ENCODE measurements at regions of chr3 and their contacts with region 1.

Region 1: DNA sequence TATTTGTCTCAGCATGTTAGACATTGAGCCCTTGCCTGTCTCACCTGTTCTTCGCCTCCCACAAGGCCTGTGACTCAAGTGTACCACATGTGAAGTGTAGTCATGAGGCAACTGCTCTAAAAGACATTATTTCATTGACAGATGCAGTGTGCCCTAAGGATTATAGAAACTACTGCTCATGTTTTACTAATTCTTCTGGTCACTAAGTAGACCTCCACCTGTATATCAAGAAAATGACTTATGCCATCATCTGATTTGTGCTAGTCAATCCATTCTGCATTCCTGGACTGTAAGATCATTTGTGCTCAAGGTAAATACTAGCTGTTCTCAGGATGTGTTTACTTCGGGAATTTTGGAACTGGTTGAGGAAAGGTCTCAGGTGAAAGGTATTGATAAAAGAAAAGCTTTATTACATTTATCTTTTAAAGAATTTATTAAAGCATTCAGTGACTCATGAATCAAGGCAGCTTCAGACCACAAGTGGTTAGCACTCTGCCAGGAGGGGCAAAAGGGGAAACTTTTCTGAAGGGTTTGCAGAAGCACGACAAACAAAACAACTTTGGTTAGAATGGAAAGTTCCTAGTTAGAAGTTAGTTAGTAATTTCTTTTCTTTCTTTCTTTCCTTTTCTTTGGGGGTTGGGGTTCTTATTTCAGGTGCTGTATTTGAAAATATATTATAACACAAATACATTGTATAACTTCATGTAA is 465.3 kb upstream of the CBLB start:
- DNase-seq: peak; percentile 80
- H3K4me3 Mint-ChIP-seq: peak overlapping the region; percentile 68
- H3K27ac Mint-ChIP-seq: peak overlapping the region; percentile 95
- H3K4me1 Mint-ChIP-seq: peaks cover 71% of the 10 kb centered on the region
- H3K27me3 Mint-ChIP-seq: no peaks in the 10 kb centered on the region

Region 2: DNA sequence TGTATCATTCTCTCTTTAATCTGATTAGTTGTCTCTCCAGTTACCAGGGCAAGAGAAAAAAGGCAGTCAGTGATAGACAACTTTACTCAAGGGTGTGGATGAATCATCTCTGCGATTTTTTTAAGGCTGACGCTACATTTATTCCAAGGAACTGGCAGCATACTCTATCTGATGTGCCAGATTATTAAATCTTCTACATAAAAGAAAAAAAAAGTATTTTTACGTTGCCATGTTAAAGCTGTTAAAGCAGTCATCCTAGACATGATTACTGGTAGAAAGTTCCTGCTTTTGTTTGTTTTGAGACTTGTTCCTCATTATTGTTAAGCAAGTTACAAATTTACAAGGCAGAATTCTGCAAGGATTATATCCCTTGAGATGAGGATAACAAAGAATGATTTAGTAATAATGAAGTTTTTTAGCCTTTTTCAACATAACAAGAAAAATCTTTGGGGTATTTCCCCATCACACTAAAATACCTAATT is 587.0 kb before region 1 on chr3:
- CTCF ChIA-PET with region 1: no interaction called
- intact Hi-C with region 1: loop called (anchors 2 kb)
- DNase-seq: no peak
- H3K4me3 Mint-ChIP-seq: no peak overlapping the region
- H3K27ac Mint-ChIP-seq: peak overlapping the region; percentile 79
- H3K4me1 Mint-ChIP-seq: peaks cover 76% of the 10 kb centered on the region
- H3K27me3 Mint-ChIP-seq: no peaks in the 10 kb centered on the region

Region 3: GRCh38 chr3:105842943-105843342 is 491.1 kb before region 1 on chr3:
- CTCF ChIA-PET with region 1: no interaction called
- intact Hi-C with region 1: no loop called
- DNase-seq: no peak
- H3K4me3 Mint-ChIP-seq: no peak overlapping the region
- H3K27ac Mint-ChIP-seq: no peak overlapping the region
- H3K4me1 Mint-ChIP-seq: peaks cover 53% of the 10 kb centered on the region
- H3K27me3 Mint-ChIP-seq: no peaks in the 10 kb centered on the region

Region 4: GRCh38 chr3:106013971-106014370 is 320.1 kb before region 1 on chr3:
- CTCF ChIA-PET with region 1: no interaction called
- intact Hi-C with region 1: loop called (anchors 2 kb)
- DNase-seq: no peak
- H3K4me3 Mint-ChIP-seq: no peak overlapping the region
- H3K27ac Mint-ChIP-seq: peak overlapping the region; percentile 37
- H3K4me1 Mint-ChIP-seq: peaks cover 49% of the 10 kb centered on the region
- H3K27me3 Mint-ChIP-seq: no peaks in the 10 kb centered on the region

Region 5: DNA sequence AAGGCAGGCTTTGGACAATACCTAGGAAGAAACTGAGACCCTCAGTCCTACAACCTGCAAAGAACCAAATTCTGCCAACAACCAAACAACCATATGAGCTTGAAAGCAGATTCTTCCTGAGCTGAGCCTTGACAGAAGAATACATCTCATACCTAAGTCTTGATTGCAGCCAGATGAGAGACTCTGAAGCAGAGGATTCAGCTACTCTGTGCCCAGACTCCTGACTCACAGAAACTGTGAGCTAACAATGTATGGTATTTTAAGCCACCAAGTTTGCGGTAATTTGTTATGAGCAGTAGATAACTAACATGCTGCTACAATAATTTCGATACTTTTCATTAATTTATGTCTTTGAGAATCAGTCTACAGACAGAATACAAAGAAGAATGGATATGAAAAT is 140.2 kb before region 1 on chr3:
- CTCF ChIA-PET with region 1: no interaction called
- intact Hi-C with region 1: no loop called
- DNase-seq: no peak
- H3K4me3 Mint-ChIP-seq: no peak overlapping the region
- H3K27ac Mint-ChIP-seq: no peak overlapping the region
- H3K4me1 Mint-ChIP-seq: peaks cover 23% of the 10 kb centered on the region
- H3K27me3 Mint-ChIP-seq: no peaks in the 10 kb centered on the region

Region 6: DNA sequence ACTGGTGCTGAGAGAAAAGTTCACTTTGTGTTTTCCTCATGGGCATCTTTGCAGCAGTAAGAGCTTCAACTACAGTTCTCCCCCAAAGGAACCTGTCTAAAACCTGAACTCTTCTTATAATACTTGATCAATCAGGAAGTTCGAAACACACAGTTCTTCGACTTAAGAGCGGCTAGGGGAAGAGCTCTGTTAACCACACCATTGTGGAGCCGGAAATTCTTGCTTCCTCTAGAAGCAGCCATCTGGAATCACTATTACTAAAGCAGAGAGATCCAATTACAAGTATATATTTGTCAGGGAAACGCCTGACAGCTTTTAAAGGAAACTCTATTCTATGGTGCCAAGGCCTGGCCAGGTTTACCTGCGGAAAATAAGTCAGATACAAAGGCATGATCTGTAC is 127.9 kb before region 1 on chr3:
- CTCF ChIA-PET with region 1: interaction called, 4 read pairs
- intact Hi-C with region 1: loop called (anchors 1 kb)
- DNase-seq: peak; percentile 47
- H3K4me3 Mint-ChIP-seq: peak overlapping the region; percentile 55
- H3K27ac Mint-ChIP-seq: peak overlapping the region; percentile 98
- H3K4me1 Mint-ChIP-seq: peaks cover 55% of the 10 kb centered on the region
- H3K27me3 Mint-ChIP-seq: no peaks in the 10 kb centered on the region

Region 7: DNA sequence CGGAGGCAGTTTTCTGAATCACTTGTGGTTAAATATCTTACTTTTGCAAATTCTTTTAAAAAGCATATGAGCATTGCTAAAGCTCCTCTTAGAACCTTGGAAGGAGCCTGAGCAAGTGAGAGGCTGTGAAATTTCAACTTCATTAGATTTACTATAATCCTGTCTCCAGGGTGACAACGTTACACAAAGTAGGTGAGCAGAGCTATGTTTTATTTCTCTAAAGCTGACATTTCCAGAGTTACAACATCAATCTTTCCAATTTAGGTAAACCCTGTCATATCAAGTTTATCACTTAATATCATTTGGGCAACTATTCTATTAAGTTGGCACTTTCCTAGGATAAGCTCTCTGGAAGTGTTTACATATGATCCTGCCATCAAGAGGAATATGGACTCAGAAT is 79.6 kb after region 1 on chr3:
- CTCF ChIA-PET with region 1: no interaction called
- intact Hi-C with region 1: no loop called
- DNase-seq: no peak
- H3K4me3 Mint-ChIP-seq: no peak overlapping the region
- H3K27ac Mint-ChIP-seq: no peak overlapping the region
- H3K4me1 Mint-ChIP-seq: peaks cover 2% of the 10 kb centered on the region
- H3K27me3 Mint-ChIP-seq: no peaks in the 10 kb centered on the region

Region 8: DNA sequence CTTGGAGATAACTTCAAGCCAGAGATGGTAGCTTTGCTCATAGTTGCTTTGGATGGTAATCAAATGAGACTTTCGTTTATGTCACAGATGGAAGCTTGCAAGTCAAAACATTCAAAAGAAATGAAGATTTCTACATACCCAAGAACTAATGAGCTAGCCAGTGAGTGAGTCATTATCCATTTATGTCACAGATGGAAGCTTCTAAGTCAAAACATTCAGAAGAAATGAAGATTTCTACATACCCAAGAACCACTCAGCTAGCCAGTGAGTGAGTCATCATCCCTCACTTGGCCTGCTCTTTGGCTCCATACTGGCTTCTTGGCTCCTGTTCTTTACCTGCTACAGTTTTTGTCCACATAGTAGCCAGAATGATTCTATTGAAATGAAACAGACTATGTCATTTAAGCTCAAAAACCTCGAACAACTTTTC is 94.5 kb after region 1 on chr3:
- CTCF ChIA-PET with region 1: interaction called, 7 read pairs
- intact Hi-C with region 1: loop called (anchors 1 kb)
- DNase-seq: peak; percentile 66
- H3K4me3 Mint-ChIP-seq: no peak overlapping the region
- H3K27ac Mint-ChIP-seq: peak overlapping the region; percentile 81
- H3K4me1 Mint-ChIP-seq: peaks cover 46% of the 10 kb centered on the region
- H3K27me3 Mint-ChIP-seq: no peaks in the 10 kb centered on the region

Region 9: DNA sequence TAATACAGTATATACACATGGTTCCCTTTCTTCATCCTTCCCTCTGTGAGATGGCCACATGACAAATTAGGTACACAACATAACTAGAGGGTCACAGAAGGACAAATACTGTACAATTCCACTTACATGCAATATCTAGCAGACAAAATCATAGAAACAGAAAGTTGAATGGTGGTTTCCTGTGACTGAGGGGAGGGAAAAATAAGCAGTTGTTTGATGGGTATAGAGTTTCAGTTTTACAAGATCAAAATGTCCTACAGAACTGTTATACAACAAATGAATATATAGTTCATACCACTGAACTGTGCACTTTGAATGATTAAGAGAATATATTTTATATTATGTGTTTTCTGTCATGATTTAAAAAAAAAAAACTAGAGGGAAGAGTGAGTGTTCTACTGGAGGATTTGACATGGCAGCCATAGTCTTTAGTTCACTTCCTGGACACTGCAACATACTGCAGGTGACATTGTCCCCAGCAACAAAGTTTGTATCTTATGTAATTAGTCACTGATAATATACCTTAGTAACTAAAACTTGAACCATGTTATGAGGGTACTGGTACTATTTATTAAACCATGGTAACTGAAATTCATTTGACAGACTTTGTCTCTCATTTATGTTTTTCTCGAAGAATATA is 1080.4 kb after region 1 on chr3:
- CTCF ChIA-PET with region 1: no interaction called
- intact Hi-C with region 1: loop called (anchors 5 kb)
- DNase-seq: peak; percentile 14
- H3K4me3 Mint-ChIP-seq: no peak overlapping the region
- H3K27ac Mint-ChIP-seq: no peak overlapping the region
- H3K4me1 Mint-ChIP-seq: peaks cover 10% of the 10 kb centered on the region
- H3K27me3 Mint-ChIP-seq: no peaks in the 10 kb centered on the region